T-cell (primary cell): ENCODE measurements at regions of chr10 and their contacts with region 1.

Region 1: DNA sequence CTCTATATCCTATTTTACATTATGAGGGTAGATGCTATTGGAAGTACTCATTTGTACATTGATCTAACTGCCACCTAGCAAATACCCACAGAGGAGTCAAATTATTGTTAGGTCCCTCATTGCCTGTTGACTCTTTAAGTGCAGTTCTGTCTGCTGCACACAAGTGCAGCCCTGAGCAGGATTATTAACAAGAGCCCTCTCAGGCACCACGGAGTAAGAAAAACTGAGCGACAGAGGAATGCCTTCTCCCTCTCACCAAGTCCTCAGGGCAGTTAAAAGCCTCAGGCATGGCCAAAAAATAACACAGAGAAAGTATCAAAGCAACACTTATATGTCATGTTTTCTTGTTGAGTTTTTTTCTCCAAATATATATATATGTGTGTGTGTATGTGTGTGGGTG is 340.0 kb upstream of the NRG3 start:
- DNase-seq: no peak
- ATAC-seq: no peak
- H3K4me3 ChIP-seq: no peak overlapping the region
- H3K4me3 Mint-ChIP-seq: no peak overlapping the region
- H3K27ac ChIP-seq: no peak overlapping the region
- H3K27ac Mint-ChIP-seq: no peak overlapping the region
- H3K4me1 ChIP-seq: no peaks in the 10 kb centered on the region
- H3K4me1 Mint-ChIP-seq: no peaks in the 10 kb centered on the region
- H3K27me3 ChIP-seq: no peaks in the 10 kb centered on the region
- H3K27me3 Mint-ChIP-seq: no peaks in the 10 kb centered on the region

Region 2: DNA sequence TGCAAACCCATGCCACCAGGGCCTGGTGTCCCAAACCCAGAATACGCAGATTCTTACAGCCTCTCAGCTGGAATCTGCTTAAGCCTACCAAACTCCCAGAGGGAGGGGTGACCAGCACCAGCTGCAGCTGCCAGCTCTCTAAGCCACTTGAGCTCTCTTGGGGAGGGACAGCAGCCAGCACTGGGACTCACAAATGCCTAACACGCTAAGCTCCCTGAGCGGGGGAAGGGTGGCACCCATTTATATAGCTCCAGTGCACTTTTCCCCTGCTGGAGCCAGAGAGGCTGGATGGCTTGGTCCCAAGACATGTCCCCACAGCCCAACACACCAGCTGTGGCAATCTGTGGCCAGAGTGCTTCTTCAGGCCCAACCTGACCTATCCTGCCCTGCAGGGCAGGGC is 13.2 kb after region 1 on chr10:
- CTCF ChIA-PET with region 1: interaction called in 1 of 2 experiments, 11 read pairs
- POLR2A ChIA-PET with region 1: no interaction called
- DNase-seq: no peak
- ATAC-seq: no peak
- H3K4me3 ChIP-seq: no peak overlapping the region
- H3K4me3 Mint-ChIP-seq: no peak overlapping the region
- H3K27ac ChIP-seq: no peak overlapping the region
- H3K27ac Mint-ChIP-seq: no peak overlapping the region
- H3K4me1 ChIP-seq: no peaks in the 10 kb centered on the region
- H3K4me1 Mint-ChIP-seq: no peaks in the 10 kb centered on the region
- H3K27me3 ChIP-seq: no peaks in the 10 kb centered on the region
- H3K27me3 Mint-ChIP-seq: no peaks in the 10 kb centered on the region